HEK293T (cell line): ENCODE measurements at regions of chr3 and their contacts with region 1.

Region 1: GRCh38 chr3:157159762-157160657 is at the start of gene CCNL1:
- DNase-seq: peak; percentile 85

Region 2: DNA sequence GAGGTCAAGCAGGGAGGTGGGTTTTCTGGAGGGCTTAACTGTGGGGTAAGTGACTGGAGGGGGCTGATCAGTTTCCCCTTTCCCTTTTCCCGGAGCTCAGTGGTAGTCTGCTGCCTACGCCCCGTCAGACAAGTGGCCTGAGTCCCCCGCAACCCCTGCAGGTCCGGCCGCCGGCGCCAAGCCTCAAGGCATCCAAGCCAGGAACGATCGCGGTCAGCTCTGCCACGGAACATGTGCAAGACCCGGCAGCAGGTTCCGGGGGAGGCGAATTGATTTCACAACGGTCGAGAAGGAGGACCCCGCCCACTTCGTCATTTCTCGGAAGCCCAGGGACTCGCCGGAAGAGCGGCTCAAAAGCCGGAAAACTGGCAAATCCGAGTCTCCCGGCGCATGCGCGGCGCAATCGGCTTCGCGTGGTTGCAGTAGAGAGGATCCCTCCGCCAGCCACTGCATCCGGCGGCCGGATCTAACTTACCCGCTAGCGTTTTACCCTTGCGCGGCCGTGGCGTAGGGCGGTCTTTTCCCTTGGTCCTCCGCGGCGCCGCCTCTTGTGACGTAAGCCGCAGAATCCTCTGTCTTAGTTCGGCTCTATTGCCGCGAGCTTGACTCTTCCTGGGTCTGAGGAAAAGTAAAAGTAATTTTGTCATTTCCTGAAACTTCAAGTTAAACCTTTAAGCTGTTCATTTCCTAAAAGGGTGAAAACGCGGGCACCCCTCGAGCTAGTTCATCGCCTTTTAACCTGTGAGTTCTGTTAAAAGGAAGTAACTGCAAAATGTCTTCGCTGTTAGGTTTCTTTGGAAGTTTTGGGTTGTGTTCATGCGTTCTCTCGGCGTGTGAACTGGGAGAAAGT is 14.9 kb after region 1 on chr3:
- CTCF ChIA-PET with region 1: interaction called, 5 read pairs
- POLR2A ChIA-PET with region 1: interaction called, 125 read pairs
- DNase-seq: peak; percentile 93